ENCODE measurements at regions of chr13 and their contacts with region 1.

Region 1: GRCh38 chr13:43804461-43805070 is 17.8 kb upstream of the ENOX1 start:
- DNase-seq: no peak
- H3K4me3 ChIP-seq: no peak overlapping the region
- H3K27ac ChIP-seq: no peak overlapping the region
- H3K4me1 ChIP-seq: no peaks in the 10 kb centered on the region
- H3K27me3 ChIP-seq: no peaks in the 10 kb centered on the region
- CTCF ChIP-seq: peak; percentile 14 to 79 (median 59)
- EP300 ChIP-seq: no peak
- POLR2A ChIP-seq: no peak

Region 2: GRCh38 chr13:42594970-42595571 is 1209.5 kb before region 1 on chr13:
- intact Hi-C with region 1: loop called in 1 of 4 experiments (anchors 5 kb)
- DNase-seq: peak; percentile 30 to 64 (median 36)
- H3K4me3 ChIP-seq: no peak overlapping the region
- H3K27ac ChIP-seq: no peak overlapping the region
- H3K4me1 ChIP-seq: no peaks in the 10 kb centered on the region
- H3K27me3 ChIP-seq: no peaks in the 10 kb centered on the region
- CTCF ChIP-seq: peak; percentile 52 to 61 (median 53)
- EP300 ChIP-seq: no peak
- POLR2A ChIP-seq: no peak

Region 3: GRCh38 chr13:43159026-43159461 is 645.5 kb before region 1 on chr13:
- intact Hi-C with region 1: no loop called
- DNase-seq: peak in 1 of 5 donors; percentile 45
- H3K4me3 ChIP-seq: no peak overlapping the region
- H3K27ac ChIP-seq: no peak overlapping the region
- H3K4me1 ChIP-seq: no peaks in the 10 kb centered on the region
- H3K27me3 ChIP-seq: no peaks in the 10 kb centered on the region
- CTCF ChIP-seq: no peak
- EP300 ChIP-seq: no peak
- POLR2A ChIP-seq: no peak

Region 4: DNA sequence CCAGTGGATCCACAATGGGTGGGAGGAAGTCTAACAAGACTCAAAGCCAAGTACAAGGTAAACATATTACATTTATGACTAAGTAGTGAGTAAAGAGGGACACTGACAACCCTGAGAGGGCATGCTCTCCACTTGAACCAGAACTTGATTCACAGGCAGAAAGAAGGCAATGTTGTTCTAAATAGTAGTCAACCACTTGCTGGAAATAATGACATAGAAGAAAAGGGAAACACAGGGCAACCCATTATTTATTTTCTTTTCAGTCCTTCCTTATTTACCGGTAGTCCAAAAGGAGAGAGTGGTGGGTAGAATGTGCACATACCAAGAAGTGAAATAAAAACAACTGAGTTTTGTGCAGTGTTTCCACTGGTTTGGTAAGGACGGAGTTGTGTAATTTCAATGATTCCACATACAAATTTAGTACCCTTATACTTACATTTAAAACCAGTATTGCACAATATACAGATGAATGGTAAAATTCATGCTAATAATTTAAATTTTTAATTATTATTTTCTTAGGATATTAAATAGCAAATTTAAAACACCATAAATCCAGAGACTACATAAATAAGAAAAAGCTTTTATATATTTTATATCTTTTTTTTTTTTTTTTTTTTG is 83.7 kb before region 1 on chr13:
- intact Hi-C with region 1: no loop called
- DNase-seq: no peak
- H3K4me3 ChIP-seq: no peak overlapping the region
- H3K27ac ChIP-seq: no peak overlapping the region
- H3K4me1 ChIP-seq: no peaks in the 10 kb centered on the region
- H3K27me3 ChIP-seq: no peaks in the 10 kb centered on the region
- CTCF ChIP-seq: no peak
- EP300 ChIP-seq: no peak
- POLR2A ChIP-seq: no peak

Region 5: DNA sequence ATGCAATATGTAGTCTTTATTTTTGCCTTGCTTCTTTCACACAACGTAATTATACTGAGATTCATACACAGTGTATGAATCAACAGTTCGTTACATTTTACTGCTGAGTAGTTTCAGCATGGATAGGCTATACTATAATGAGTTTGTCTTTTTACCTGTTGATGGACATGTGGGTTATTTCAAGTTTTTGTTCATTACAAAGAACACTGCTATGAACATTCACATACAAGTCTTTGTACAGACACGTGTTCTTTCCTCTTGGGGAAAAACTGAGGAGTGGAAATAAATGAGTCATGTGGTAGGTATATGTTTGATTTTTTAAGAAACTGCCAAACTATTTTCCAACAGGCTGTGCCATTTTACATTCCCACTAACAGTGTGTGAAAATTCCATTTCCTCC is 52.9 kb before region 1 on chr13:
- intact Hi-C with region 1: no loop called
- DNase-seq: no peak
- H3K4me3 ChIP-seq: no peak overlapping the region
- H3K27ac ChIP-seq: no peak overlapping the region
- H3K4me1 ChIP-seq: no peaks in the 10 kb centered on the region
- H3K27me3 ChIP-seq: no peaks in the 10 kb centered on the region
- CTCF ChIP-seq: no peak
- EP300 ChIP-seq: no peak
- POLR2A ChIP-seq: no peak

Region 6: GRCh38 chr13:43878892-43879754 is 74.6 kb after region 1 on chr13 and contains the start of gene CCDC122:
- intact Hi-C with region 1: loop called in 1 of 4 experiments (anchors 10 kb)
- DNase-seq: peak; percentile 75 to 89 (median 77)
- H3K4me3 ChIP-seq: peak within 1 kb of the TSS; percentile 70
- H3K27ac ChIP-seq: peak within 1 kb of the TSS; percentile 80 to 90
- H3K4me1 ChIP-seq: peaks cover 1% of the 10 kb centered on the region
- H3K27me3 ChIP-seq: no peaks in the 10 kb centered on the region
- CTCF ChIP-seq: peak in 1 of 3 donors; percentile 7
- EP300 ChIP-seq: no peak
- POLR2A ChIP-seq: peak; percentile 17
- total RNA-seq, gene CCDC122: 4.2 to 15.2 (median 6.6) TPM

Measured in ovary (tissue), 10 donors.